ENCODE measurements at regions of chr2 and their contacts with region 1.

Region 1: DNA sequence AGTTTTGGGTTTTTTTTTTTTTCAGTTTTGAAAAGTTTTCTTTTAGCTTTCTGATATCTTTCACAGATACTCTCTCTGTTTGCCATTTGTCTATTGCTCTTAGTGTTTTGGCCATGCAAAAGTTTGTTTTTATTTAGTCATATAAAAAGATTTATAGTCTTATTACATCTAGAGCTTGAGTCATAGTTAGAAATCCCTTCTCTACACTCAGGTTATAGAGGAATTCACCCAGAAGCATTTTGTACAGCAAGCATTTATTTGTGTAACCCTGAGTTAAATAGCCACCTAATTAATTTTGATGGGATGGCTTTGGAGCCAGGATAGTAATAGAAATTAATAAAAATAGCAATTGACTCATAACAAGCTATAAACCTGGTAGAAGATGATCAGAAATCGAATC is 35.6 kb downstream of the ACTR2 start:
- DNase-seq: no peak
- H3K4me3 ChIP-seq: no peak overlapping the region
- H3K27me3 ChIP-seq: no peaks in the 10 kb centered on the region
- CTCF ChIP-seq: no peak

Region 2: GRCh38 chr2:65300761-65301711 is 37.8 kb after region 1 on chr2:
- CTCF ChIA-PET with region 1: no interaction called
- POLR2A ChIA-PET with region 1: no interaction called
- DNase-seq: peak; percentile 83
- H3K4me3 ChIP-seq: 0 out of 2 replicates have a peak overlapping the region, but pooled peaks have one; percentile 5
- H3K27me3 ChIP-seq: no peaks in the 10 kb centered on the region
- CTCF ChIP-seq: peak; percentile 7; the same call in 1 of the 2 replicates

Region 3: GRCh38 chr2:65456064-65456463 is 192.8 kb after region 1 on chr2:
- CTCF ChIA-PET with region 1: no interaction called
- POLR2A ChIA-PET with region 1: no interaction called
- DNase-seq: no peak
- H3K4me3 ChIP-seq: no peak overlapping the region
- H3K27me3 ChIP-seq: no peaks in the 10 kb centered on the region
- CTCF ChIP-seq: no peak

Region 4: DNA sequence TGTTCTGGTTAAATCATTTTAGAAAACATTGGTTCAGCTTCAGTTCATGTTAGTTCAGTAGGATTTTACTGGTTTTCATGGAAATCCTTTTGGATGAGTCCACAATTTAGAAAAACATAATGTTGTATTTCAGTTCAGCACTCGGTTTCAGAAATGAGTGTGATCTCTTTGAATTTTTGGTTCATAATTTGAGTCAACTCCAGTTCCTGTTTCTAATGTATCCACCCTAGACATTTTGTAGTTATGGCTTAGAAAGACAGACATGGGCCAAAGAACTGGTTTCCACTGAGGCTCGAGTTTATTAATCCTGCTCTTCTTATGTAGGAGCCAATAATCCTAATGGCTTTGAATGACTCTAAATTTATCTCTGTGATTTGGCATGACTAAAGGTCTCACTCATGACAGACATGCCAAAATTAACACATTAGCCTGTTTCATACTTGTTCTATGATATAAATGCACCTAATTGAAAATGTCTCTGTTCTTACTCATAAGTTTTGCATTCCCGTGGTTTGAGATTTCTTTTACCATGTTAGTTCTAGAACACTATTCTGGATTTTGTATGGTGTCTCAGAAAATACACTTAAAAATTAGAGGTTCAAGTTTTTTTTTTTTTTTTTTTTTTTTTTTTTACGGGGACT is 251.4 kb after region 1 on chr2:
- CTCF ChIA-PET with region 1: no interaction called
- POLR2A ChIA-PET with region 1: no interaction called
- DNase-seq: no peak
- H3K4me3 ChIP-seq: no peak overlapping the region
- H3K27me3 ChIP-seq: no peaks in the 10 kb centered on the region
- CTCF ChIP-seq: no peak

Region 5: DNA sequence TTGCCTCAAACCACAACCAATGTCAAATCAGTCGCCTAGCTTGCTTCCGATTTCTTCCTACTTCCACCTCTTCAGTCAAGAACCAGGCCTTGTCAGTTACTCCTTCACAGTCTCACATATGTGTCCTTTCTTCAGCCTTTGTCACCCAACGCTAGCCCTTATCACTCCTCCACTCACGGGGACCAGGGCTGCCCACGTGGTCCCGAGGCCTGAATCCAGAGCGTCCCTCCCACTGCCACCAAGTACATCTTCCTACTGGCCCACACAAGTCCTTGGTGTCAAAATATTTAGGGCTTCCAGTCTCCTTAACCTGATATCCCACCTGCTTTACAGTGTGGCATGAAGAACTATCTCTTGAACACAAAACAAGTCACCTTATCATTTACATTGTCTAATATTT is 288.3 kb after region 1 on chr2:
- CTCF ChIA-PET with region 1: interaction called, 10 read pairs
- POLR2A ChIA-PET with region 1: no interaction called
- DNase-seq: no peak
- H3K4me3 ChIP-seq: no peak overlapping the region
- H3K27me3 ChIP-seq: peaks cover 1% of the 10 kb centered on the region; the same call in 1 of the 2 replicates
- CTCF ChIP-seq: no peak